ENCODE measurements at regions of chrX and their contacts with region 1.

Region 1: GRCh38 chrX:2188330-2188792 is 312.4 kb downstream of the DHRSX start:
- DNase-seq: no peak
- H3K4me3 ChIP-seq: no peak overlapping the region
- H3K27ac ChIP-seq: no peak overlapping the region
- H3K4me1 ChIP-seq: no peaks in the 10 kb centered on the region
- H3K27me3 ChIP-seq: no peaks in the 10 kb centered on the region
- CTCF ChIP-seq: no peak
- POLR2A ChIP-seq: no peak

Region 2: GRCh38 chrX:1108501-1109445 is 1079.6 kb before region 1 on chrX:
- intact Hi-C with region 1: no loop called
- DNase-seq: no peak
- H3K4me3 ChIP-seq: no peak overlapping the region
- H3K27ac ChIP-seq: no peak overlapping the region
- H3K4me1 ChIP-seq: no peaks in the 10 kb centered on the region
- H3K27me3 ChIP-seq: no peaks in the 10 kb centered on the region
- CTCF ChIP-seq: no peak
- POLR2A ChIP-seq: no peak

Region 3: DNA sequence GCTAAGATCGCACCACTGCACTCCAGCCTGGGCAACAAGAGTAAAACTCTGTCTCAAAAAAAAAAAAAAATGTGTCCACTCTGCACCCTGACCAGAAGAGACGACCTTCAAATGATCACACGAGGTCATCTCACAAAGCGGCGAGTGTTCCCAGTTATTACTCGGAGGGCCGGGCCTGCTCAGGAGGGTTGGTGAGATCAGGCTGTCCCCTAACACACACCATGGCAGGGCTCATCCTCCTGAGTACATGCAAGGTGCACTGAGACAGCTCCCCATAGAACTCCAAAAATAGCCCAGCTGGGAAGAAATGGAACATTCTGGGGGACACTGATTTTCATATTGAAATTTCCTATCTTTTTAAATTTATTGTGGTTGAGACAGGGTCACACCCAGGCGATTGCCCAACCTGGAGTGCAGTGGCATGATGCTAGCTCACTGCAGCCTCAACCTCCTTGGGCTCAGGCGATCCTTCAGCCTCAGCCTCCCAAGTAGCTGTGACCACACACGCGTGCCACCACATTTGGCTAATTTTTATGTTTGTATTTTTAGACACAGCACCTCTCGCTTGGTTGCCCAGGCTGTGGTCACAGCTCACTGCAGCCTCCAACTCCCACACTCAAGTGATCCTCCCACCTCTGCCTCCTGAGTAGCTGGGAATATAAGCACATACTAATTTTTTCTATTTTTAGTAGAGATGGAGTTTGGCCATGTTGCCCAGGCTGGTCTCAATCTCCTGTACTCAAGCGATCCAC is 260.9 kb after region 1 on chrX:
- intact Hi-C with region 1: loop called (anchors 10 kb)
- DNase-seq: no peak
- H3K4me3 ChIP-seq: no peak overlapping the region
- H3K27ac ChIP-seq: no peak overlapping the region
- H3K4me1 ChIP-seq: no peaks in the 10 kb centered on the region
- H3K27me3 ChIP-seq: no peaks in the 10 kb centered on the region
- CTCF ChIP-seq: no peak
- POLR2A ChIP-seq: no peak

Measured in uterus (tissue), 4 donors.